ENCODE measurements at regions of chr2 and their contacts with region 1.

Region 1: GRCh38 chr2:171579481-171579880 is 57.2 kb downstream of the CYBRD1 start:
- DNase-seq: no peak
- H3K4me3 ChIP-seq: no peak overlapping the region
- H3K27ac ChIP-seq: no peak overlapping the region
- H3K4me1 ChIP-seq: no peaks in the 10 kb centered on the region
- H3K27me3 ChIP-seq: no peaks in the 10 kb centered on the region
- CTCF ChIP-seq: no peak
- POLR2A ChIP-seq: no peak

Region 2: GRCh38 chr2:172685467-172685866 is 1106.0 kb after region 1 on chr2:
- intact Hi-C with region 1: loop called (anchors 5 kb)
- DNase-seq: no peak
- H3K4me3 ChIP-seq: no peak overlapping the region
- H3K27ac ChIP-seq: no peak overlapping the region
- H3K4me1 ChIP-seq: no peaks in the 10 kb centered on the region
- H3K27me3 ChIP-seq: no peaks in the 10 kb centered on the region
- CTCF ChIP-seq: no peak
- POLR2A ChIP-seq: no peak

Measured in breast epithelium (tissue), 4 donors.